ENCODE measurements at regions of chr5 and their contacts with region 1.

Region 1: GRCh38 chr5:73498057-73499008 is at the start of gene BTF3:
- DNase-seq: peak; percentile 96
- H3K4me3 Mint-ChIP-seq: peak within 1 kb of the TSS; percentile 96
- H3K27ac Mint-ChIP-seq: peak within 1 kb of the TSS; percentile 98
- H3K4me1 Mint-ChIP-seq: peaks cover 13% of the 10 kb centered on the region
- H3K27me3 Mint-ChIP-seq: no peaks in the 10 kb centered on the region
- CTCF ChIP-seq: no peak
- total RNA-seq, gene BTF3: 794 and 872 TPM in 2 replicates

Region 2: DNA sequence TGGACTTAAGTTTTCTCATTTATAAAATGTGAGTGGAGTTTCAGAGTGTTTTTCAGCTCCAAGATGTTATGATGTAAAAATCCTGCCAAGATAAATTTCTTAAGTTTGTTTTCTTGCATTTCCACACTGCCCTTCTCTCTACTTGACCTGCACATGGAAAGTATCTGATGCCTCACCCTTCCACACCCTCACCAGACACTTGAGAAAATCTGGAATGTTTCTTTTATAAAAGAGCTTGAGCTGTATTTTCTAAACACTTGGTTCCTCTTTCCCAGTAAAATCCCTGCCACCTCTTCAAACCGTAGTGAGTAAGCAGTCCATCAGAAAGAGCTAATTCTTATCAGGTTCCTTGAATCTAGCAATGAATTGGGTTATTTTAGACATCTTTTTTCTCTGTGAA is 92.6 kb before region 1 on chr5:
- CTCF ChIA-PET with region 1: no interaction called
- intact Hi-C with region 1: no loop called
- DNase-seq: no peak
- H3K4me3 Mint-ChIP-seq: no peak overlapping the region
- H3K27ac Mint-ChIP-seq: no peak overlapping the region
- H3K4me1 Mint-ChIP-seq: no peaks in the 10 kb centered on the region
- H3K27me3 Mint-ChIP-seq: peaks cover 4% of the 10 kb centered on the region
- CTCF ChIP-seq: no peak

Region 3: DNA sequence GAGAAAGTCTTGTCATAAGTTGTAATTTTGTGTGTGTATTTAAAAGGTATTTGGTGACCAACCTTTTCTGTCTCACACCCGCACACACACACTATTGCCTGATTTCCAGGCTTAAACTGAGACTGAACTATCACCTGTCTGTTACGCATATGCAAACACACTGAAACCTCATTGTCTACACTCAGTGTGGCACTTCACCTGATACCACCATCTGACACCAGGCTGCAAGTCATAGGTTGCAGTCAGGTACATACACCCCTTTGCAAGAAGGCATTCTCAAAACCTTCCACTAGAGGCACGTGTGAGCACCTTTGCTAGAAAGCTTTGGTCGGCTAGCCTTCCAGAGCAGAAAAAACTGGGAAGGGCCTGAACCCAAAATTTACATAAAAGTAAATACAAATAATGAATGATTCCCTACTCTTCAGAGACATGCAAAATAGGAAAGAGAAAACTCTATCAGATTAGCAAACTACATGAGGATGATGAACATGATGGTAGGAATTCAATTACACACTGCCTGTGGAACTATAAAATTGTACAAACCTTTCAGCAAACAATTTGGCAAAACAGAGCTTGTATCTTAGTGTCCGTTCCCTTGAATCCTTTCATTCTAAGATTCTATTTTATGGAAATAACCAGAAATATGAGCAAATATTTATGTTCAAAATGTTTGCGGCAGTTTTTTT is 43.8 kb before region 1 on chr5:
- CTCF ChIA-PET with region 1: interaction called, 11 read pairs
- intact Hi-C with region 1: loop called (anchors 5 kb)
- DNase-seq: peak; percentile 83
- H3K4me3 Mint-ChIP-seq: no peak overlapping the region
- H3K27ac Mint-ChIP-seq: no peak overlapping the region
- H3K4me1 Mint-ChIP-seq: peaks cover 10% of the 10 kb centered on the region
- H3K27me3 Mint-ChIP-seq: peaks cover 43% of the 10 kb centered on the region
- CTCF ChIP-seq: peak; percentile 58

Region 4: GRCh38 chr5:73701518-73701917 is 203.2 kb after region 1 on chr5:
- CTCF ChIA-PET with region 1: no interaction called
- intact Hi-C with region 1: no loop called
- DNase-seq: no peak
- H3K4me3 Mint-ChIP-seq: no peak overlapping the region
- H3K27ac Mint-ChIP-seq: peak overlapping the region; percentile 15
- H3K4me1 Mint-ChIP-seq: peaks cover 50% of the 10 kb centered on the region
- H3K27me3 Mint-ChIP-seq: no peaks in the 10 kb centered on the region
- CTCF ChIP-seq: no peak

Region 5: GRCh38 chr5:74017786-74018211 is 519.5 kb after region 1 on chr5:
- CTCF ChIA-PET with region 1: no interaction called
- intact Hi-C with region 1: no loop called
- DNase-seq: no peak
- H3K4me3 Mint-ChIP-seq: no peak overlapping the region
- H3K27ac Mint-ChIP-seq: no peak overlapping the region
- H3K4me1 Mint-ChIP-seq: peaks cover 24% of the 10 kb centered on the region
- H3K27me3 Mint-ChIP-seq: peaks cover 16% of the 10 kb centered on the region
- CTCF ChIP-seq: no peak